Activated naive CD4-positive, alpha-beta T cell treated with anti-CD3 and anti-CD28 coated beads for 36 hours (primary cell): ENCODE measurements at regions of chr4 and their contacts with region 1.

Region 1: DNA sequence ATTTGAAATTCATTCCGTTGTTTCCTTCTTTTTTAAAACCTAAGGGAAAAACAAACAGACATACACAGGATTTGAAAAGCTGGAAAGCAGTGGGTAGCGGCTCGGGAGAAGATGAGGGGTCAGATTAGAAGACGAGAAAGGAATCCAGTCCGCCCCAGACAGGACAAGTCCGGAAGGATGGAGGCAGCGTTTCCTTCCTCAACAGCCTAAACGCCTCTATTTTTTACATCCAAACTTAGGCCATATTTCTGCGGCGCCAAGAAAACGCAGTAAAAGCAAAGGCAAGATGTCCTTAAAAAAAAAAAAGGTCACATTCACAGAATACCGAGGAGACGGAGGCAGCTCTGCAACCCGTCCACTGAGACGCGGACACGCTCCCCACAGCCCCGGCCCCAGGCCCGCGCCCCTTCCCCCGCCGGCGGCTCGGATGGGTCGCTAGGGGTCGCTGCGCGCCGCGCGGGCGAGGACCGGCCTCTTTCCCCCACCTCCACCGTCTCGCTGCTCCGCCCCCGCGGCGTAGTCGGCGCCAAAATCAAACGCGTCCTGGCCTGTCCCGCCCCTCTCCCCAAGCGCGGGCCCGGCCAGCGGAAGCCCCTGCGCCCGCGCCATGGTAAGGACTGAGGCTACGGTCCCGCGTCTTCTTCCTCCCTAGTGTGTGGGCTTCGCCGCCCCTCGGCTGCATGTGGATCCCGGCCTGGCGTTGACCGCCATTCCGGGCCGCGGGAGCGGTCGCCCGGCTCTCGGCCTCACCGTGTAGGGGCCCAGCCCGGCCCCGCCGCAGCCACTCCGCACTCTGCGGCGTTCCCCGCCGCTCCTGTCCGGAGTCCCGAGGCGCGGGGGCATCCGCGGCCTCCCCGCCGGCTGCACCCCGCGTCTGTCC is at the start of gene MND1:
- DNase-seq: peak; percentile 94
- H3K4me3 Mint-ChIP-seq: peak within 1 kb of the TSS; percentile 93
- H3K27ac Mint-ChIP-seq: peak within 1 kb of the TSS; percentile 92
- H3K4me1 Mint-ChIP-seq: peaks cover 33% of the 10 kb centered on the region
- H3K27me3 Mint-ChIP-seq: peaks cover 2% of the 10 kb centered on the region
- total RNA-seq, gene MND1: 51.3 to 52.6 TPM

Region 2: GRCh38 chr4:153362184-153362583 is 17.8 kb after region 1 on chr4:
- CTCF ChIA-PET with region 1: interaction called, 7 read pairs
- intact Hi-C with region 1: loop called (anchors 1 kb)
- DNase-seq: no peak
- H3K4me3 Mint-ChIP-seq: no peak overlapping the region
- H3K27ac Mint-ChIP-seq: no peak overlapping the region
- H3K4me1 Mint-ChIP-seq: peaks cover 10% of the 10 kb centered on the region
- H3K27me3 Mint-ChIP-seq: no peaks in the 10 kb centered on the region

Region 3: GRCh38 chr4:153383131-153383530 is 38.8 kb after region 1 on chr4:
- CTCF ChIA-PET with region 1: no interaction called
- intact Hi-C with region 1: no loop called
- DNase-seq: no peak
- H3K4me3 Mint-ChIP-seq: no peak overlapping the region
- H3K27ac Mint-ChIP-seq: no peak overlapping the region
- H3K4me1 Mint-ChIP-seq: no peaks in the 10 kb centered on the region
- H3K27me3 Mint-ChIP-seq: no peaks in the 10 kb centered on the region

Region 4: GRCh38 chr4:153409412-153409811 is 65.0 kb after region 1 on chr4:
- CTCF ChIA-PET with region 1: no interaction called
- intact Hi-C with region 1: no loop called
- DNase-seq: no peak
- H3K4me3 Mint-ChIP-seq: no peak overlapping the region
- H3K27ac Mint-ChIP-seq: no peak overlapping the region
- H3K4me1 Mint-ChIP-seq: peaks cover 4% of the 10 kb centered on the region
- H3K27me3 Mint-ChIP-seq: no peaks in the 10 kb centered on the region

Region 5: GRCh38 chr4:153438916-153439756 is 94.8 kb after region 1 on chr4:
- CTCF ChIA-PET with region 1: interaction called, 11 read pairs
- intact Hi-C with region 1: loop called (anchors 1 kb)
- DNase-seq: peak; percentile 44
- H3K4me3 Mint-ChIP-seq: peak overlapping the region; percentile 72
- H3K27ac Mint-ChIP-seq: peak overlapping the region; percentile 88
- H3K4me1 Mint-ChIP-seq: peaks cover 57% of the 10 kb centered on the region
- H3K27me3 Mint-ChIP-seq: no peaks in the 10 kb centered on the region

Region 6: GRCh38 chr4:153528705-153529485 is 184.5 kb after region 1 on chr4:
- CTCF ChIA-PET with region 1: no interaction called
- intact Hi-C with region 1: loop called (anchors 2 kb)
- DNase-seq: no peak
- H3K4me3 Mint-ChIP-seq: peak overlapping the region; percentile 60
- H3K27ac Mint-ChIP-seq: peak overlapping the region; percentile 97
- H3K4me1 Mint-ChIP-seq: peaks cover 91% of the 10 kb centered on the region
- H3K27me3 Mint-ChIP-seq: no peaks in the 10 kb centered on the region

Region 7: GRCh38 chr4:153649572-153649991 is 305.2 kb after region 1 on chr4:
- CTCF ChIA-PET with region 1: interaction called, 65 read pairs
- intact Hi-C with region 1: no loop called
- DNase-seq: peak; percentile 44
- H3K4me3 Mint-ChIP-seq: no peak overlapping the region
- H3K27ac Mint-ChIP-seq: no peak overlapping the region
- H3K4me1 Mint-ChIP-seq: peaks cover 32% of the 10 kb centered on the region
- H3K27me3 Mint-ChIP-seq: no peaks in the 10 kb centered on the region

Region 8: GRCh38 chr4:154018659-154019058 is 674.3 kb after region 1 on chr4:
- CTCF ChIA-PET with region 1: no interaction called
- intact Hi-C with region 1: loop called (anchors 5 kb)
- DNase-seq: peak; percentile 57
- H3K4me3 Mint-ChIP-seq: no peak overlapping the region
- H3K27ac Mint-ChIP-seq: no peak overlapping the region
- H3K4me1 Mint-ChIP-seq: no peaks in the 10 kb centered on the region
- H3K27me3 Mint-ChIP-seq: peaks cover 5% of the 10 kb centered on the region